ENCODE measurements at regions of chr1 and their contacts with region 1.

Region 1: GRCh38 chr1:83905315-83905907 is 93.5 kb downstream of the TTLL7 start:
- DNase-seq: peak in 4 of 14 experiments; percentile 15 to 53 (median 46)
- ATAC-seq: peak; percentile 54
- H3K4me3 ChIP-seq: no peak overlapping the region
- H3K4me3 Mint-ChIP-seq: no peak overlapping the region
- H3K27ac ChIP-seq: no peak overlapping the region
- H3K27ac Mint-ChIP-seq: no peak overlapping the region
- H3K4me1 ChIP-seq: no peaks in the 10 kb centered on the region
- H3K4me1 Mint-ChIP-seq: no peaks in the 10 kb centered on the region
- H3K27me3 ChIP-seq: no peaks in the 10 kb centered on the region
- H3K27me3 Mint-ChIP-seq: peaks cover 18% of the 10 kb centered on the region
- CTCF ChIP-seq: peak; percentile 89

Region 2: GRCh38 chr1:84122780-84123382 is 217.5 kb after region 1 on chr1:
- CTCF ChIA-PET with region 1: no interaction called
- POLR2A ChIA-PET with region 1: no interaction called
- intact Hi-C with region 1: loop called (anchors 1 kb)
- DNase-seq: peak; percentile 18 to 70 (median 41)
- ATAC-seq: peak; percentile 59
- H3K4me3 ChIP-seq: no peak overlapping the region
- H3K4me3 Mint-ChIP-seq: no peak overlapping the region
- H3K27ac ChIP-seq: no peak overlapping the region
- H3K27ac Mint-ChIP-seq: no peak overlapping the region
- H3K4me1 ChIP-seq: no peaks in the 10 kb centered on the region
- H3K4me1 Mint-ChIP-seq: no peaks in the 10 kb centered on the region
- H3K27me3 ChIP-seq: no peaks in the 10 kb centered on the region
- H3K27me3 Mint-ChIP-seq: no peaks in the 10 kb centered on the region
- CTCF ChIP-seq: peak; percentile 91